H1 (cell line): ENCODE measurements at regions of chr6 and their contacts with region 1.

Region 1: GRCh38 chr6:30914076-30914853 is at the start of gene VARS2:
- DNase-seq: peak; percentile 61 to 97
- H3K4me3 ChIP-seq: peak within 1 kb of the TSS; percentile 41 to 74 (median 66)
- H3K27ac ChIP-seq: no peak within 1 kb of the TSS
- H3K4me1 ChIP-seq: peaks cover 0 to 14% (median 6%) of the 10 kb centered on the region in 4 experiments; a peak in 5 of 7 replicates
- H3K27me3 ChIP-seq: no peaks in the 10 kb centered on the region
- CTCF ChIP-seq: no peak
- EP300 ChIP-seq: no peak
- POLR2A ChIP-seq: peak in 1 of 2 experiments; percentile 74; a peak in 2 of 3 replicates
- RAD21 ChIP-seq: 0 out of 4 replicates have a peak, but pooled peaks of 1 of the 2 experiments have one; percentile 8
- total RNA-seq, gene VARS2: 41.2 and 47.7 TPM in 2 replicates

Region 2: GRCh38 chr6:30656513-30656912 is 257.8 kb before region 1 on chr6:
- CTCF ChIA-PET with region 1: no interaction called
- POLR2A ChIA-PET with region 1: no interaction called
- DNase-seq: no peak
- H3K4me3 ChIP-seq: no peak overlapping the region
- H3K27ac ChIP-seq: no peak overlapping the region
- H3K4me1 ChIP-seq: no peaks in the 10 kb centered on the region
- H3K27me3 ChIP-seq: no peaks in the 10 kb centered on the region
- CTCF ChIP-seq: no peak
- EP300 ChIP-seq: no peak
- POLR2A ChIP-seq: no peak
- RAD21 ChIP-seq: no peak

Region 3: GRCh38 chr6:30883685-30884520 is 30.4 kb before region 1 on chr6 and contains the start of gene DDR1:
- CTCF ChIA-PET with region 1: interaction called, 35 read pairs
- POLR2A ChIA-PET with region 1: interaction called, 9 read pairs
- DNase-seq: peak in 1 of 2 experiments; percentile 76
- H3K4me3 ChIP-seq: peak within 1 kb of the TSS; percentile 57 to 86 (median 80)
- H3K27ac ChIP-seq: peak within 1 kb of the TSS; percentile 86
- H3K4me1 ChIP-seq: peaks cover 12 to 52% (median 37%) of the 10 kb centered on the region in 4 experiments
- H3K27me3 ChIP-seq: no peaks in the 10 kb centered on the region
- CTCF ChIP-seq: no peak
- EP300 ChIP-seq: no peak
- POLR2A ChIP-seq: no peak
- RAD21 ChIP-seq: no peak
- total RNA-seq, gene DDR1: 181 and 182 TPM in 2 replicates

Region 4: GRCh38 chr6:30926644-30927043 is 12.4 kb after region 1 on chr6:
- CTCF ChIA-PET with region 1: interaction called, 51 read pairs
- POLR2A ChIA-PET with region 1: interaction called, 22 read pairs
- DNase-seq: no peak
- H3K4me3 ChIP-seq: no peak overlapping the region
- H3K27ac ChIP-seq: no peak overlapping the region
- H3K4me1 ChIP-seq: peaks cover 0 to 3% (median under 1%) of the 10 kb centered on the region in 4 experiments; a peak in 2 of 7 replicates
- H3K27me3 ChIP-seq: no peaks in the 10 kb centered on the region
- CTCF ChIP-seq: no peak
- EP300 ChIP-seq: no peak
- POLR2A ChIP-seq: no peak
- RAD21 ChIP-seq: no peak

Region 5: DNA sequence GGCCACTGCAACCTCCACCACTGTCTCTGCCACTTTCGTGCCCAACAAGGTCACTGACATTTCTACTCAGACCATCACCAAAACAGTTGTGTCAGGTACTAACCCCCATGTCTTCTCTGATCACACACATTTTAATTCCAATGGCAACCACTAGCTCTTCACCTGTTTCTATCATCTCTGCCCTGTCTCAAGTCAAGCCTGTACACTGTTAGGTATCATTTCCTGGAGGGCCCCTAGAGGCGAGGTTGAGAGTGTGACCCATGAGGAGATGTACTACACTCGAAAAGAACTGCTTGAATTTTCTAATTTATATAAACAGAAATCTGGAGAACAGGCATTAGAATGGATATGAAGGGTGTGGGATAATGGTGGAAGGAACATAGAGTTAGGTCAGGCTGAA is 51.9 kb after region 1 on chr6:
- CTCF ChIA-PET with region 1: interaction called, 10 read pairs
- POLR2A ChIA-PET with region 1: no interaction called
- DNase-seq: no peak
- H3K4me3 ChIP-seq: no peak overlapping the region
- H3K27ac ChIP-seq: no peak overlapping the region
- H3K4me1 ChIP-seq: peaks cover 0 to 4% (median 0%) of the 10 kb centered on the region in 4 experiments; a peak in 1 of 7 replicates
- H3K27me3 ChIP-seq: no peaks in the 10 kb centered on the region
- CTCF ChIP-seq: no peak
- EP300 ChIP-seq: no peak
- POLR2A ChIP-seq: no peak
- RAD21 ChIP-seq: no peak

Region 6: DNA sequence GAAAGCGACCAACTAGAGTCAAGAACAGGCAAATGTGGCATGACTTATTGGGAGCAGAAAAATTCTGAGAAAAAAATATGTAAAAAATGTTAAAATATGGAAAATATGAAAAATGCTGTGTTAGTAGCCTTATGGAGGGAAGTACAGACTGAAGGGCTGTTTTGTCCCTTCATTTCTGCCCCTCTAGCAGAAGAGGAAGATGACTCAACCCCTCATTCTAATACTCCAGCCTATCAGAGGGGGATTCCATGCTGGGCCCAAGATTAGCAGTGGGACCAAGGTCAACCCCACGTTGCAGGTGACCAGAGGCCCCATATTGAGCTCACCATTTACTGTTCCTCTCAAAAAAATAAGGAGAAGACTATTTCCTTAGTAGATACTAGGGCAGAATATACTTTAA is 77.6 kb after region 1 on chr6:
- CTCF ChIA-PET with region 1: no interaction called
- POLR2A ChIA-PET with region 1: no interaction called
- DNase-seq: no peak
- H3K4me3 ChIP-seq: no peak overlapping the region
- H3K27ac ChIP-seq: no peak overlapping the region
- H3K4me1 ChIP-seq: peaks cover 0 to 2% (median 0%) of the 10 kb centered on the region in 4 experiments; a peak in 2 of 7 replicates
- H3K27me3 ChIP-seq: no peaks in the 10 kb centered on the region
- CTCF ChIP-seq: no peak
- EP300 ChIP-seq: no peak
- POLR2A ChIP-seq: no peak
- RAD21 ChIP-seq: no peak

Region 7: DNA sequence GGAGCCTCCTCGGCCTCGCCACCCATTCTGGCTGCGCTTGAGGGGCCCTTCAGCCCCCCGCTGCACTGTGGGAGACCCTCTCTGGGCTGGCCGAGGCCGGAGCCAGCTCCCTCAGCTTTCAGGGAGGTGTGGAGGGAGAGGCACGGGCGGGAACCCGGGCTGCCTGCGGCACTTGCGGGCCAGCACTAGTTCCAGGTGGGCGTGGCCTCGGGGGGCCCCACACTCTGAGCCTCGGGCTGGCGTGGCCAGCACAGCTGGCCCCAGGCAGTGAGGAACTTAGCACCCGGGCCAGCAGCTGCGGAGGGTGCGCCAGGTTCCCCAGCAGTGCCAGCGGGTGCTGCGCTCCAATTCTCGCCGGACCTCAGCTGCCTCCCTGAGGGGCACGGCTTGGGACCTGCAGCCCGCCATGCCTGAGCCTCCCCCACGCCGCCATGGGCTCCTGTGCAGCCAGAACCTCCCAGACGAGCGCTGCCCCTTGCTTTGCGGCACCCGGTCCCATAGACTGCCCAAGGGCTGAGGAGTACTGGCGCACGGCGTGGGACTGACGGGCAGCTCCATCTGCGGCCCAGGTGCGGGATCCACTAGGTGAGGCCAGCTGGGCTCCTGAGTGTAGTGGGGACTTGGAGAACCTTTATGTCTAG is 102.5 kb after region 1 on chr6:
- CTCF ChIA-PET with region 1: no interaction called
- POLR2A ChIA-PET with region 1: no interaction called
- DNase-seq: no peak
- H3K4me3 ChIP-seq: no peak overlapping the region
- H3K27ac ChIP-seq: no peak overlapping the region
- H3K4me1 ChIP-seq: no peaks in the 10 kb centered on the region; a peak in 1 of 7 replicates
- H3K27me3 ChIP-seq: no peaks in the 10 kb centered on the region; a peak in 1 of 7 replicates
- CTCF ChIP-seq: no peak
- EP300 ChIP-seq: no peak
- POLR2A ChIP-seq: no peak
- RAD21 ChIP-seq: no peak

Region 8: DNA sequence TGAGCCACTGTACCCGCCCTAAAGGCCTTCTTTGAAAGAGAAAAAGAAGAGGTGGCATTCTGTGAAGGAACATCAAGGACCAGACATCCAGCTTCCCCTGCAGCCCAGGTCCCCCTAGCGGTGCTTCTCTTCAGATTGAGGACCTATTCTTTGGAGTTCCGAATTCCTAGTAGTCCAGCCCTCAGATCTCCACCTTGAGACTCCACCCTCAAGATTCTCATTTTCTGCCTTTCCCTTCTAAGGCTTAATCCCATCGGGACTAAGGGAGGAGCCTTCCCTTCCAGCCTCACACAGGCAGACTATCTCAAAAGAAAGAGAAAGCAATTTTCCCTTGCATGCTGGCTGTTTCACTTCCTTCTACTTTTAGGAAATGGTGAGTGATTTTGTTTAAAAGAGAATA is 128.5 kb after region 1 on chr6:
- CTCF ChIA-PET with region 1: interaction called, 85 read pairs
- POLR2A ChIA-PET with region 1: interaction called, 4 read pairs
- DNase-seq: peak; percentile 21 to 60
- H3K4me3 ChIP-seq: no peak overlapping the region
- H3K27ac ChIP-seq: no peak overlapping the region
- H3K4me1 ChIP-seq: no peaks in the 10 kb centered on the region
- H3K27me3 ChIP-seq: no peaks in the 10 kb centered on the region; a peak in 1 of 7 replicates
- CTCF ChIP-seq: peak; percentile 58 to 75 (median 74)
- EP300 ChIP-seq: no peak
- POLR2A ChIP-seq: no peak
- RAD21 ChIP-seq: peak; percentile 61 to 72

Region 9: DNA sequence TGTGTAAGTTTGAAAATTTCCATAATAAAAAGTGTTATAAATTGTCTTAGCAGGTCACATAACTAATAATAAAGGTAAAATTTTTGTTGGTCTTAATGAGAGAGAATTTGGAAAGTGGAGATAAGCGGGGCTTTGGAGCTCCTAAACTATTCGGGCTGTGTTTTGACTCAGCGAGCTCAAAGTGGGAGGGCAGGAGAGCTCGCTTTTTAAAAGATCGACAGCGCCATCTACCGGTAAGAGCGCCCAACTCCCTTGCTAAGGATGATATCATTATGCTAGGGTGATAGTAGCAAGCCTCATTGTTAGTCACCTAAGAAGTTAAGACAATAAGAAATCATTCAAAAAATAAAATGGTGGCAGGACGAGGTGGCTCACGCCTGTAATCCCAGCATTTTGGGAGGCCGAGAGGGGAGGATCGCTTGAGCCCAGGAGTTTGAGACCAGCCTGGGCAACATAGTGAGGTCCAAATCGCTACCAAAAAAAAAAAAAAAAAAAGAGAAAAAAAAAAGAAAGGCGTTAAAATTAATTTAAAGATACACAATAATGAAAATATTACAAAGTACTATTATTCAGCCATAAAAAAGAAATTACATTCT is 173.3 kb after region 1 on chr6:
- CTCF ChIA-PET with region 1: interaction called, 285 read pairs
- POLR2A ChIA-PET with region 1: interaction called, 4 read pairs
- DNase-seq: peak in 1 of 2 experiments; percentile 87
- H3K4me3 ChIP-seq: no peak overlapping the region
- H3K27ac ChIP-seq: no peak overlapping the region
- H3K4me1 ChIP-seq: no peaks in the 10 kb centered on the region; a peak in 1 of 7 replicates
- H3K27me3 ChIP-seq: no peaks in the 10 kb centered on the region
- CTCF ChIP-seq: peak; percentile 47 to 70 (median 67)
- EP300 ChIP-seq: no peak
- POLR2A ChIP-seq: no peak
- RAD21 ChIP-seq: peak; percentile 81 to 83